ENCODE measurements at regions of chr11 and their contacts with region 1.

Region 1: DNA sequence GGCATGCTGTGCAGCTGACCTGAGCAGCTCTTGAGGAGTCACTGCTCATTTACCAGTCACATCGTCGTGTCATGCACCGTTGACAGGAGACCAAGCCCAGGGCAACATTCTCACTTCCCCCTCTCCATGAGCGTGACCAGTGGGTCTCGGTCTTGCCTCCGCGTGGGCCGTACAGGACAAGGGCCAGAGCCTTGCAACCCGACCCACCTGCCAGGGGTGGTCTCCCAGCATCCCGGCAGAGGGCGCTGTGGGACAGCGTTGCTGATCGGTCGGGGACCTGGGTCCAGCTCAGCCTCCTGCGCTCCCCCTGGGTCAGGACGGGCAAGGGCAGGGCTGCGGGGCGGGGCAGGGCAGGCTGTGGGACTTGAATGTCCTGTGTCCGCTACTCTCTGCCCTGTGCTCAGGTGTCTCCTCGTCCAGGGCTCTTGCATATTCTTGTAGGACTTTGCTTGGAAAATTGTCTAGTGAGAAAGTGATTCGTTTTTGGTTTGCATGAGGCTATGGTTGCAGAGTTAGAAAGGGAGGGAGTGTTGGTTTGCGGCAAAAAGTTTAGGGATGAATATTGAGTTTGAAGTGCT is 16.2 kb downstream of the EIF4G2 start:
- DNase-seq: peak; percentile 89 to 96 (median 94)
- ATAC-seq: peak; percentile 91 to 95
- H3K4me3 ChIP-seq: no peak overlapping the region
- H3K27ac ChIP-seq: no peak overlapping the region
- H3K4me1 ChIP-seq: no peaks in the 10 kb centered on the region
- H3K27me3 ChIP-seq: no peaks in the 10 kb centered on the region

Region 2: DNA sequence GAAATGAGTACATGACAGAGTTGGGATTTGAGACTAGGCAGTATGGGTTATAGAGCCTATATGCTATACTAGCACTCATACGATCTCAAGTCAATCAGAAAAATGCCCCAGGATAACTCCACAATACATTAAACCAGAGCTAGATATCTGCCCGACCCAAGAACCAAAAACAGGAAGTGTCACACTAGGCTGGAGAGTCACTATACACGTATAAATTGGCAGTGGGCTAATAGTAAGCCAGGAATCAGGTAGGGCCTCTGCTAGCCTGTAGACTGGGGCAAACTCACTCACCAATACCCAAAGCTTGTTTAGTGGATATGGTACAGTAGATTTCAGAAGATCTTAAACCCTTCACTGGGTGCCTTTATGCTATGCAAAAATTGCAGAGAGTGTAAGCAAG is 32.4 kb after region 1 on chr11:
- intact Hi-C with region 1: no loop called
- DNase-seq: no peak
- ATAC-seq: no peak
- H3K4me3 ChIP-seq: no peak overlapping the region
- H3K27ac ChIP-seq: no peak overlapping the region
- H3K4me1 ChIP-seq: no peaks in the 10 kb centered on the region
- H3K27me3 ChIP-seq: no peaks in the 10 kb centered on the region

Region 3: DNA sequence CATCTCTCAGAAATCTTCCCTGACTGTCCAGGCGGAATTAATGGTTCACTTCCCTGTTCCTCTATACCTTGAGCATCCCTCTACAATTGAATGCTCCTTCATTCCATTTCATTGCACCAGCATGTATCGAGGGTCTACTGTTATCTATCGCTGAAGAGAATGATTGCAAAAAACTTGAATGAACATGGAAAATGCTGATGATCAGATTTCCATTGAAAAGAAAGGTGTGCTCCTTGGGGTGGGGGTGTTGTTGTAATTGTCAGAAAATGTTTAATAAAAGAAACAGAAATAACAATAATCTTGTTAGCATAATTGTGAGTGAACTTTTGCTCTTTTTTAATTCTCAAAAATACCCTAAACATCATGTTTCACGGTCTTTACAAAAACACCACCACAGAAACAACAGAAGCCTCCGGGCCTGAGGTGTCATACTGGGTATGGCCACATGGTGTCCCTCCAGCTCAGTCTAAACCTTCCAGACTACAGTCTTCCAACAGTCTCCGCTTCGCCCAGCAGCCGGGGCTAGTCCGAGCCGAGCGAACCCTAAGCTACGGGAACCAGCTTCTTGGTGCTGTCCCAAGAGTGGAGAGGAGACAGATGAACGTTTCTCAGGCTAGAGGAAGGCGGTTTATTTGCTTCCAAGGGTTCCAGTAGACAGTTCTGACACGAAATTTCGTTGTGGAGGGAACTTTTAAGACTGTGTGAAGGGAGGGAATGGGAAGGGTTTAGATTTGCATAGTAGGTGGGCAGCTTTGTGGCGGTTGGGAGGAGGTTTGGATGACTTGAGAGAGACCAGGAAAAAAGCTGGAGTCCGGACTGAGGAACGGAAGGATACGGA is 141.2 kb after region 1 on chr11:
- intact Hi-C with region 1: loop called in 1 of 4 experiments (anchors 5 kb)
- DNase-seq: peak; percentile 90 to 96 (median 95)
- ATAC-seq: peak; percentile 87 to 90
- H3K4me3 ChIP-seq: peak overlapping the region; percentile 52
- H3K27ac ChIP-seq: peak overlapping the region; percentile 83
- H3K4me1 ChIP-seq: peaks cover 2% of the 10 kb centered on the region
- H3K27me3 ChIP-seq: no peaks in the 10 kb centered on the region

Region 4: GRCh38 chr11:11016068-11016467 is 223.6 kb after region 1 on chr11:
- intact Hi-C with region 1: loop called (anchors 5 to 10 kb)
- DNase-seq: no peak
- ATAC-seq: no peak
- H3K4me3 ChIP-seq: no peak overlapping the region
- H3K27ac ChIP-seq: no peak overlapping the region
- H3K4me1 ChIP-seq: no peaks in the 10 kb centered on the region
- H3K27me3 ChIP-seq: no peaks in the 10 kb centered on the region

Region 5: DNA sequence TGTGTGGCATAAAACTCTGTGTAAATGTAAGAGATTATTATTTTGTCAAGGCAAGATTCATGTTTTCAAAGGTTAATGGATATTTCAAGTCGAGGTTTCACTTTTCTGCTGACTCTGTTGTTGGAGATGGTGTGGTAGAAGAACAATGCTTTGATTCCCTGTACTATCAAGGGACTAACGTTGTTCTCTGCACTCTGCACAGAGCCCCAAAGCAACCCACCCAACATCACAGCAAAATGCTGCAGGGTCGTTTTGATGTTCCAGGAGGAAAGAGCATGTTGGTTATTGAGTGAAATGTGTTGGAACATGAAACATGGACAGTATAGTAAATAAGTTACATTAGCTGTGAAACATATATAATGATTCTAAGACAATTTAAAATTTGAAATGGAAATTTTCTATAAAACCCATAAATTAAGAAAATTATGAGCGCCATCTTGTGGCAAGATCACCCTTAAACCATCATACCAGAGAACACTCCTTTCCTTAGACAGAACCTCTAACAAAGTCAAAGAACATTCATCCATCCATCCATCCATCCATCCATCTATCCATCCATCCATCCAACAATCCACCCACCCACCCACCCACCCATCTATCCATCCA is 229.7 kb after region 1 on chr11:
- intact Hi-C with region 1: loop called (anchors 5 to 10 kb)
- DNase-seq: no peak
- ATAC-seq: peak in 1 of 2 donors; percentile 23
- H3K4me3 ChIP-seq: no peak overlapping the region
- H3K27ac ChIP-seq: no peak overlapping the region
- H3K4me1 ChIP-seq: no peaks in the 10 kb centered on the region
- H3K27me3 ChIP-seq: no peaks in the 10 kb centered on the region

Region 6: GRCh38 chr11:11028017-11028692 is 235.7 kb after region 1 on chr11:
- intact Hi-C with region 1: loop called in 3 of 4 experiments (anchors 5 to 10 kb)
- DNase-seq: peak; percentile 64 to 89 (median 83)
- ATAC-seq: peak; percentile 78 to 84
- H3K4me3 ChIP-seq: no peak overlapping the region
- H3K27ac ChIP-seq: no peak overlapping the region
- H3K4me1 ChIP-seq: no peaks in the 10 kb centered on the region
- H3K27me3 ChIP-seq: no peaks in the 10 kb centered on the region